ENCODE measurements at regions of chr6 and their contacts with region 1.

Region 1: DNA sequence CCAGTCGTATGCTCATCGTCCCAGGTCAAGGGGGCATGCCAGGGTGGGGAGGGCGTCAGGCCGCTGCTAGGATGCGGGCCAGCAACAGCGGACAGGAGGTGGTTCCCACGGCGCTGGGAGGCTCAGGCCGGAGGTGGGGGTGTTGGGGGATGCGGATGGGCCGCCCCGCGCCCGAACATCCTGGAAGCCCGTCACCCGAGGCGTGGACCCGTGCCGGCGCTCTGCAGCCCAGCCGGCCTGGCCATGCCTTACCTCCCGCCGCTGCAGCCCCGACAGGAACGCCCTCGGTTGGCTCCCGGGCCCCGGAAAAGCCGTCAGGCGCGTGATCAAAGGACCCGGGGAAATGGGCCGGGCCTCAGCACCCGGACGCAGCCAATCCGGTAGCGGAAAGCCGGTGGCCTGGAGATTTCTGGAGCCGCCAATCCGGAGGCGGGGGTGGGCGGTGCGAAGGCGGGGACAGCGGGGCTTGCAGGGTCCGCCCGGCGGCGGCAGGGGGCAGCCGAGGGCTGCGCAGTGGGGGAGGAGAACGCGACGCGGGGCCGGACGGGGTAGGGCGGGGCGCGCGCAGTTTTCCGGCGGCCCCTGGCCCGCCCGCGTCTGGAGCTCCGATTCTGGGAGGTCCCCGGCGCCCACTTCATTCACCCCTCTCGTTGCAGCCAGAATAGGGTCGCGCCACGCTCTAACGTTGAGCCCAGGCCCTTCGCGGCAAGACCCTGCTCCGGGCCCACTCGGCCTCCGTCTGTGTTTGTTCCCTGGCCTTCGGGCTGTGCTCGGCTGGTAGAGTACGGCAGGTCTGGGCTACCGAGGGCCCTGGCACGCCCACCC is at the start of gene SMIM29:
- DNase-seq: peak; percentile 97
- H3K4me3 Mint-ChIP-seq: peak within 1 kb of the TSS; percentile 96
- H3K27ac Mint-ChIP-seq: peak within 1 kb of the TSS; percentile 97
- H3K4me1 Mint-ChIP-seq: peaks cover 49% of the 10 kb centered on the region
- H3K27me3 Mint-ChIP-seq: peaks cover 6% of the 10 kb centered on the region
- total RNA-seq, gene SMIM29: 22.4 to 23.1 TPM

Region 2: GRCh38 chr6:34005901-34006531 is 242.9 kb before region 1 on chr6:
- CTCF ChIA-PET with region 1: no interaction called
- POLR2A ChIA-PET with region 1: no interaction called
- DNase-seq: no peak
- H3K4me3 Mint-ChIP-seq: no peak overlapping the region
- H3K27ac Mint-ChIP-seq: no peak overlapping the region
- H3K4me1 Mint-ChIP-seq: no peaks in the 10 kb centered on the region
- H3K27me3 Mint-ChIP-seq: peaks cover 14% of the 10 kb centered on the region

Region 3: DNA sequence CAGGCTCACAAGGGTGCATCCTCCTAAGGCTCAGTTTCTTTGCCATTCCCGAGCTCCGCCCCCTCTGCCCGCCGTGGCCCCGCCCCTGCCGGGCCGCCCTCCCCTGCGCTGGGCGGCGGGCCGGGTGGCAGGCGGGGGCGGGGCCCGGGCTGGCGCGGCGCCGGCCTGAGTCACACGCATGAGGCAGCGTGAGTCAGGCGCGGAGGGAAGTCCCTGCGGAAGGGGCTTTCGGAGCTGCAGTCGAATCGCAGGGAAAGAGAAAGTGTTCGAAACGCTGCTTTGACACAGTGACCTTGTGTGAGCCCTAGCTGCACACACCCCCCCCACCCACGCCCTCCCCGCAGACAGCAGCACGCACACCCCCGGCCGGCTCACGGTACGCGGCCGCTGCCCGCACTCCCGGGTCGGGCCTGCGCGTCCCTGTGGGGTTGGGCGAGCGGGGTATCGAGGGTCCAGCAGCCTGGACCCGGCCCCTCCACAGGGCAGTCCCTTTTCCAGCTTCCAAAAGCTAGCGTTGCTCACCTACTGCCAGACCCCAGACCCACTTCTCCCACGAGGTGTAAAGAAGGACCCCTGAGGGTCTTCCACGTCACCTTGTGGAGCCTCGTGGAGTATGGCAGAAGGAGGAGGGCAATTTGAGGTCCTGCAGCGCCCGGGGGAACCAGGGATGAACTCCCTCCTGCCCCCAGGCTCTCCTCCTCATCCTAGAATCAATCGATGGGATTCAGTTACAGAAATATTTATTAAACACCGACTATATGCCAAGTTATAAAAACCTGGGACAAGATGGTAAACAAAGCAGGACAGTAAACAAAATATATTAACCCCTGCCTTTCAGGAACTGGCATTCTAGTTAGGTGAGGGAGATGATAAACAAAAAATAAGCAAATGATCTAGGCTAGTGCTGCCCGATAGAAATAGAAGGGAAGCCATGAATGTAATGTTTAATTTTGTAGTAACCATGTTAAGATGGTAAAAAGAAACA is 24.7 kb before region 1 on chr6:
- CTCF ChIA-PET with region 1: interaction called, 11 read pairs
- POLR2A ChIA-PET with region 1: no interaction called
- DNase-seq: peak; percentile 93
- H3K4me3 Mint-ChIP-seq: peak overlapping the region; percentile 63
- H3K27ac Mint-ChIP-seq: peak overlapping the region; percentile 81
- H3K4me1 Mint-ChIP-seq: peaks cover 40% of the 10 kb centered on the region
- H3K27me3 Mint-ChIP-seq: no peaks in the 10 kb centered on the region

Region 4: GRCh38 chr6:34232901-34233300 is 16.0 kb before region 1 on chr6:
- CTCF ChIA-PET with region 1: interaction called, 18 read pairs
- POLR2A ChIA-PET with region 1: no interaction called
- DNase-seq: no peak
- H3K4me3 Mint-ChIP-seq: no peak overlapping the region
- H3K27ac Mint-ChIP-seq: no peak overlapping the region
- H3K4me1 Mint-ChIP-seq: peaks cover 23% of the 10 kb centered on the region
- H3K27me3 Mint-ChIP-seq: no peaks in the 10 kb centered on the region

Region 5: GRCh38 chr6:34358389-34358905 is 109.5 kb after region 1 on chr6:
- CTCF ChIA-PET with region 1: no interaction called
- POLR2A ChIA-PET with region 1: no interaction called
- DNase-seq: no peak
- H3K4me3 Mint-ChIP-seq: no peak overlapping the region
- H3K27ac Mint-ChIP-seq: no peak overlapping the region
- H3K4me1 Mint-ChIP-seq: peaks cover 25% of the 10 kb centered on the region
- H3K27me3 Mint-ChIP-seq: no peaks in the 10 kb centered on the region

Region 6: DNA sequence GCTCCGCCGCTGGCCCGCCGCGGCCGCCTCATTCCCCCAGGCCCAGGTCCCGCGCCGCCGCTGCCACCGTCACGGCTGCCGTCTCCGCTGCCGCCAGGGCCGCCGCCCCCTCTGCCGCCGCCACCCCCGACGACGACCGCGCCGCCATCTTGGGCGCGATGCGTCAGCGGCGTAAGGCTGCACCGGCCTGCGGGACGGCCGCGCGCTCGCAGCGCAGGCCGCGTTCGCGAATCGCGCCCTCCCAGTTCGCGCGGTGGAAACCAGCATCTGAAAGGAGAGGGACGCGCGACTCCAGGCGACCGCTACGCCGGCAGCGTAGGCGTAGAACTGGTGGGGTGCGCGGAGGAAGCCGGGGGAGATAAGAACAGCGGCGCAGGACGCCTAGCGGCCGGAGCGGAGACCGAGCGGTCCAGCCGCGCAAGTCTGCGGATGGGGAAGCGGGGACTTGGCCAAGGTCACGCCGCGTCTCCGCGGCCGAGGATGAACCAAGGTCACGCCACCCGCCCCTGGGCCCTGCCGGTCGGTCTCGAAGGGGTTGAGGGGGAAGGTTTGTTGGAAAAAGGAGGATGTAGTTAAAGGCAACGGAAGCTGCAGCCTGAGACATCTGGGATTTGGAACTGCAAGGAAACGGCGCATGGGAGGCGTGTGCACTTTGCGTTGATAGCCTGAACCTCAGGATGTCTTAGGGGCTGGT is 143.7 kb after region 1 on chr6 and contains the start of gene NUDT3:
- CTCF ChIA-PET with region 1: no interaction called
- POLR2A ChIA-PET with region 1: no interaction called
- DNase-seq: peak; percentile 92
- H3K4me3 Mint-ChIP-seq: peak within 1 kb of the TSS; percentile 68
- H3K27ac Mint-ChIP-seq: peak within 1 kb of the TSS; percentile 93
- H3K4me1 Mint-ChIP-seq: peaks cover 9% of the 10 kb centered on the region
- H3K27me3 Mint-ChIP-seq: no peaks in the 10 kb centered on the region
- total RNA-seq, gene NUDT3: 12.4 to 13.3 TPM

Region 7: GRCh38 chr6:34414999-34415858 is 166.3 kb after region 1 on chr6:
- CTCF ChIA-PET with region 1: interaction called, 40 read pairs
- POLR2A ChIA-PET with region 1: interaction called, 4 read pairs
- DNase-seq: peak; percentile 54
- H3K4me3 Mint-ChIP-seq: no peak overlapping the region
- H3K27ac Mint-ChIP-seq: peak overlapping the region; percentile 19
- H3K4me1 Mint-ChIP-seq: peaks cover 4% of the 10 kb centered on the region
- H3K27me3 Mint-ChIP-seq: no peaks in the 10 kb centered on the region

Measured in activated CD4-positive, alpha-beta T cell treated with anti-CD3 and anti-CD28 coated beads, Interleukin-2, amount 10 ng/mL, durations not matched to agents 7 days and 5 days (primary cell).